B cell (primary cell): ENCODE measurements at regions of chr10 and their contacts with region 1.

Region 1: DNA sequence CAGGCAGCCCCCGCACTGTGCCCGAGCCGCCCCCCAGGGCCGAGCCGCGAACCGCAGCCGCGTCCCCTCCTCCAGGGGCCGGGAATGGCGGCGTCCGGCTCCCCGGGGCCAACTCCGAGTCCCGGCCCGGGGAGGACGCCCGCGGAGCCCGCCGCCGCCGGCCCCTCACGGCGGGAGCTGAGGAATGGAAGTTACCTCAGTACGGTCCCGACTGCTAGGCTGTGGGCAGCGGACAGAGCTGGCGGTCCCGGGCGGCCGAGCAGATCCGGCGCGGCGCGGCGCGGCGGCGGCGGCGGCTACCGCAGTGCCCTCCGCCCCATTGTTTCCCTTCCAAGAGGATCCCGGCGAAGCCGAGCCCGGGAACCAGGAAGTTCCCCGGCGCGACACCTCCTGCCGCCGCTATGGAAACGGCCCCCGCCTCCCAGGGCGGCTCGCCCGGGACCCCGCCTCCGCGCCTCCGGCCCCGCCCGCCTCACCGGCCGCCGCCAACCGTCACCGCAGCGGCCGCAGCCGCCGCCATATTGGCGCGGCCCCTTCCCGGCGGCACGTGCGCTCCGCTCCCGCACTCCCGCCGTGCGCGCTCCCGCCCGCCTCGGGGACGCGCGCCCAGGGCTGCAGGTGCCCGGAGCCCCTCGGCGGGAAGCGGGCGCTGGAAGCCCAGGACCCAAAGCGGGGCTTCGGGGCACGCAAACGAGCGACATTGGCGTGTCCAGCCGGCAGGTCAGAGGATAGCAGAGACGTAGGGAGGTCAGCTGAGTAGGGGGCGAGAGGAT is at the start of gene USP6NL:
- DNase-seq: peak; percentile 88
- ATAC-seq: peak; percentile 81
- H3K4me3 ChIP-seq: peak within 1 kb of the TSS; percentile 70 to 87 (median 81)
- H3K4me3 Mint-ChIP-seq: peak within 1 kb of the TSS; percentile 95
- H3K27ac ChIP-seq: peak within 1 kb of the TSS; percentile 67 to 87
- H3K27ac Mint-ChIP-seq: peak within 1 kb of the TSS; percentile 97
- H3K4me1 ChIP-seq: peaks cover 37 to 42% of the 10 kb centered on the region in 2 donors
- H3K4me1 Mint-ChIP-seq: peaks cover 42% of the 10 kb centered on the region
- H3K27me3 ChIP-seq: no peaks in the 10 kb centered on the region
- H3K27me3 Mint-ChIP-seq: no peaks in the 10 kb centered on the region
- CTCF ChIP-seq: no peak
- total RNA-seq, gene USP6NL: 61.5 and 62.6 TPM in 2 replicates

Region 2: DNA sequence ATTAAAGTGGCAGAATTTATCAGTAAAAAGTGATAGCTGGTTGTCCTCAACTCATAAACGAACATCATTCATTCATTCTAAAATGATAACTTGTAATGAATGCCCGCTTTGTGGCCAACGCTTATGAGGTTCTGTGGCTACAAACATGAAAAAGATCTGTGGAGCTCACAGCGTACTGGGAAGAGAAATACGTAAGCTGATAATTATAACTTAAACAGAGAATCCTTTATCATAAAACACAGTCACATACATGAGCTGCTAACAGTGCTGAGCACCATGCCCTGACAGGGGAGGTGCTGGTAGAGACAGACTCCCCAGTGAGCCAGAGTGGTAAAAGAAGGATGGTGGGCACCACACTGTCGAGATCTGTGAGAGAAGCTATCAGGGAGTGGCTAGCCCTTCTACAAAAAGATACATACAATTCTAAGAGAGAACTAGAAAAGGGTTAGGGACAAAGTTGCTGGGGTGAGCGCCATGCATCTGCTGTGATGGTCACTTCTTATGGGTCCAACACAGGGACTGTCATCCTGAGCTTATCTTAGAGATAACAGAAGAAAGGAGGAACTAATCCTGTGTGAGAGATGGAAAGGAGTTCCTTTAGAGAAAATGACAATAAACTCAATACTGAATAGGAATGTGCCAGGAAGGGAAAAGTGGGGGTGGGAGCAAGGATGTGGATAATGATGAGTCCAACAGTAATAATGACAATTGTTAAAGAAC is 106.7 kb before region 1 on chr10:
- CTCF ChIA-PET with region 1: no interaction called
- POLR2A ChIA-PET with region 1: no interaction called
- intact Hi-C with region 1: no loop called
- DNase-seq: no peak
- ATAC-seq: no peak
- H3K4me3 ChIP-seq: no peak overlapping the region
- H3K4me3 Mint-ChIP-seq: no peak overlapping the region
- H3K27ac ChIP-seq: no peak overlapping the region
- H3K27ac Mint-ChIP-seq: peak overlapping the region; percentile 28
- H3K4me1 ChIP-seq: no peaks in the 10 kb centered on the region
- H3K4me1 Mint-ChIP-seq: peaks cover 21% of the 10 kb centered on the region
- H3K27me3 ChIP-seq: no peaks in the 10 kb centered on the region
- H3K27me3 Mint-ChIP-seq: no peaks in the 10 kb centered on the region
- CTCF ChIP-seq: no peak

Region 3: DNA sequence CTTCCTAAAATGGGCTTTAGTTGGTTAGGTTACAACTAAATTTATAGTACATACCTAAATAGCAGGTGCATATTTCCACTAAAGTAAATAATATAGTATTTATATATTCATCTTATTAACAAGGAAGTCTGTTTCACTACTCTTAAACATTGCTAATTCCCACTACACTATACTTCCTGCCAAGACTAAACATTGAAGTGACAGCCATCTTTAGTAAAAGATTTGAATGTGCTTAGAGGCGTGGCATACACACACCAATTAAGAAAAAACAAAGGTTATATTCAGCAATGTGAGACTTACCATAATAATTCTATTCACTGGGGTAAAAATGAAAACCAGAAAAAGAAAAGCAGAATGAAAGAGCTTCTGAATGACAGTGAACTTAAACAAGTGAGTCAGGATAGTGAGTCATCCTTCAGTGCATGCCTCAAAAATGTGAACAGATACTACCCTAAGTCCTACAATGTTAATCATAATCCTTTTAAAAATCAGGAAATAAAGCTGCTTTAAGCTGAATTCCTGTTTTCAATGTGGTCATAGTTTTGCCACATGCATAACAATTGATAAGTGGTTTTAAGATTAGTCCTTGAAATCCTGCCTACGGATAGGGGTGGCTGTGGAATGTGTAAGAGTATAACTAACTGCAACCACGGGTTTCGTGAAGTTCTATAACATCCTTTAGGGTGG is 59.4 kb before region 1 on chr10:
- CTCF ChIA-PET with region 1: interaction called, 4 read pairs
- POLR2A ChIA-PET with region 1: interaction called, 10 read pairs
- intact Hi-C with region 1: no loop called
- DNase-seq: peak; percentile 31
- ATAC-seq: peak; percentile 46
- H3K4me3 ChIP-seq: no peak overlapping the region
- H3K4me3 Mint-ChIP-seq: peak overlapping the region; percentile 64
- H3K27ac ChIP-seq: peak overlapping the region in 1 of 2 donors; percentile 81
- H3K27ac Mint-ChIP-seq: peak overlapping the region; percentile 83
- H3K4me1 ChIP-seq: peaks cover 69 to 78% of the 10 kb centered on the region in 2 donors
- H3K4me1 Mint-ChIP-seq: peaks cover 82% of the 10 kb centered on the region
- H3K27me3 ChIP-seq: no peaks in the 10 kb centered on the region
- H3K27me3 Mint-ChIP-seq: no peaks in the 10 kb centered on the region
- CTCF ChIP-seq: no peak

Region 4: GRCh38 chr10:11625019-11625735 is 13.7 kb after region 1 on chr10:
- CTCF ChIA-PET with region 1: interaction called, 5 read pairs
- POLR2A ChIA-PET with region 1: no interaction called
- intact Hi-C with region 1: loop called (anchors 1 kb)
- DNase-seq: peak; percentile 89
- ATAC-seq: peak; percentile 94
- H3K4me3 ChIP-seq: peak overlapping the region in 2 of 5 experiments; percentile 26 to 35
- H3K4me3 Mint-ChIP-seq: peak overlapping the region; percentile 76
- H3K27ac ChIP-seq: peak overlapping the region; percentile 75 to 78
- H3K27ac Mint-ChIP-seq: peak overlapping the region; percentile 92
- H3K4me1 ChIP-seq: peaks cover 27 to 28% of the 10 kb centered on the region in 2 donors
- H3K4me1 Mint-ChIP-seq: peaks cover 50% of the 10 kb centered on the region
- H3K27me3 ChIP-seq: no peaks in the 10 kb centered on the region
- H3K27me3 Mint-ChIP-seq: no peaks in the 10 kb centered on the region
- CTCF ChIP-seq: no peak

Region 5: GRCh38 chr10:11663763-11664555 is 52.5 kb after region 1 on chr10:
- CTCF ChIA-PET with region 1: interaction called, 5 read pairs
- POLR2A ChIA-PET with region 1: no interaction called
- intact Hi-C with region 1: loop called (anchors 2 kb)
- DNase-seq: peak; percentile 70
- ATAC-seq: peak; percentile 70
- H3K4me3 ChIP-seq: peak overlapping the region in 4 of 5 experiments; percentile 10 to 41 (median 25)
- H3K4me3 Mint-ChIP-seq: peak overlapping the region; percentile 87
- H3K27ac ChIP-seq: peak overlapping the region; percentile 63 to 89
- H3K27ac Mint-ChIP-seq: peak overlapping the region; percentile 97
- H3K4me1 ChIP-seq: peaks cover 82 to 87% of the 10 kb centered on the region in 2 donors
- H3K4me1 Mint-ChIP-seq: peaks cover 82% of the 10 kb centered on the region
- H3K27me3 ChIP-seq: no peaks in the 10 kb centered on the region
- H3K27me3 Mint-ChIP-seq: no peaks in the 10 kb centered on the region
- CTCF ChIP-seq: no peak

Region 6: DNA sequence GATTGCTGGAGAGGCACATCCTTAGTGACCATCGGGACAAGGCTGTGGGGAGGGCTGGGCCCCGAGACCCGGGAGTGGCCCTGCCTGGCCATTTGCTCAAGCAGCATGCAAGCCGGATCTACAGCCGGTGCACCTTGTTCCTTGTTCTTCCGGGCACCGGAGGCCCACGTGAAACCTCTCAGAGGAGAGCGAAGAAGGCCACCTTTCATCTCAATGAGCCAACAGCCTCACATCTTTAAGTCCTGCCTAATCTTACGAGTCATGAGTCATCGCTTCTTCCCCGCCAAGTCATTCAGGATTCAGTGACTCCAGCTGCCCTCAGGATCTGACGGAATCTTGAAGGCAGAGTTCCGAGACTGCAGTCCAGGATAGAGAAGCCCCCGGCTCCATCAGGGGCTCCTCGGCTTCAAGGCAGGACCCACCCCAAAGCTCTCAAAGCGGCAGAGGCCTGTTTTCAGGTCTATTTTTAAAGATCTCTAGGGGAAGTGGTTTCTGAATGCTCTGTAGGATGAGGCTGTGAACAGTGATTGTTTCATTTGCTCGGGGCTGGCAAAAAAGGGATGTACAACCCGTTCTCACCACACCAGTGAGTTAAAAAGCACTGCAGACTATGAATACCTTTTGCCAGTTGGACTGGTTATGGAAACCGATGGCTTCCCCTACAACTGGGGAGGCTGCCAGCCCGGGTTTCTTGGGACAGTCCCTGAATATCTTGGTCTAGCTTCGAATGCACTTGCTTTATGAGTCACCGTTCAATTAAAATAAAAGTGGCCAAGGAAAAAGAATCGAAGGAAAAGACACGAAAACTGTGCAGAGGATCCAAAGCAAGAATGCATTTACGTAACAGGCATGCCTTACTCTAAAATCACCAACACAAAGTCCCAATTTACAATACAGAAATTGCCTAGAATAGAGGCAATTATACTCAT is 73.5 kb after region 1 on chr10:
- CTCF ChIA-PET with region 1: interaction called, 7 read pairs
- POLR2A ChIA-PET with region 1: interaction called, 5 read pairs
- intact Hi-C with region 1: loop called (anchors 2 kb)
- DNase-seq: peak; percentile 91
- ATAC-seq: peak; percentile 74
- H3K4me3 ChIP-seq: peak overlapping the region; percentile 39 to 63 (median 58)
- H3K4me3 Mint-ChIP-seq: peak overlapping the region; percentile 93
- H3K27ac ChIP-seq: peak overlapping the region; percentile 96 to 98
- H3K27ac Mint-ChIP-seq: peak overlapping the region; percentile 99
- H3K4me1 ChIP-seq: peaks cover 81 to 90% of the 10 kb centered on the region in 2 donors
- H3K4me1 Mint-ChIP-seq: peaks cover 90% of the 10 kb centered on the region
- H3K27me3 ChIP-seq: no peaks in the 10 kb centered on the region
- H3K27me3 Mint-ChIP-seq: no peaks in the 10 kb centered on the region
- CTCF ChIP-seq: no peak